HCT116 (cell line): ENCODE measurements at regions of chr11 and their contacts with region 1.

Region 1: DNA sequence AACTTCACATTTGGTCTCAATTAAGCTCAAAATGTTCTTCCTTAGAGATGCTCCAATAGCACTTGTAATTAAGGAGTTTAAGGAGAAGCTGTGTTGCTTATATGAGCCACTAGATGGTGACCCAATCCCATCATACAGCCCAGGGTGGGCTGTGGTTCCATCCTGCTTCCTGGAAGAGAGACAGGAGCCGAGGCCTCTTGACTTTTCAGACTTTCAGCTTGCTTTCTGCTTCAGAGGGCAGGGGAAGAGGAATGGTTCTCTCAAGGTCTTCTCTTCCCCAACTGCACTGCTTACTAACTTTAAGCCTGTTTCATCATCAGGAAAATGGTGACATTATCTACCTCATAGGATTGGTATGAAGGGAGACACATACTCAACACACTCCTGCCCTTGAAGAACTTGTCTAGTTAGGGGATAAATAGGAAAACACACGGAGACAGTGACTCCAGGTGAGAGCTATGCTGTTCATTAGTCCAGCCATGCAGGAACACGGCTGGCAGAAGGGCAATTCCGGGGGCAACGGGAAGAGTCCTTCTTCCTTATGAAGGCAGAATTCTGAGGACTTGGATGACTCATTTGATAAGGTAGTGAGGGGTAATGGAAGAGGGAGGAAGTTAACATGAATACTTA is 20.1 kb downstream of the TMEM218 start:
- DNase-seq: no peak
- ATAC-seq: peak; percentile 80
- H3K4me3 ChIP-seq: no peak overlapping the region
- H3K27ac ChIP-seq: no peak overlapping the region
- H3K4me1 ChIP-seq: peaks cover 9 to 31% of the 10 kb centered on the region in 2 experiments; a peak in 3 of 4 replicates
- H3K27me3 ChIP-seq: no peaks in the 10 kb centered on the region
- CTCF ChIP-seq: peak; percentile 60 to 87 (median 80)
- POLR2A ChIP-seq: no peak
- RAD21 ChIP-seq: peak; percentile 90

Region 2: DNA sequence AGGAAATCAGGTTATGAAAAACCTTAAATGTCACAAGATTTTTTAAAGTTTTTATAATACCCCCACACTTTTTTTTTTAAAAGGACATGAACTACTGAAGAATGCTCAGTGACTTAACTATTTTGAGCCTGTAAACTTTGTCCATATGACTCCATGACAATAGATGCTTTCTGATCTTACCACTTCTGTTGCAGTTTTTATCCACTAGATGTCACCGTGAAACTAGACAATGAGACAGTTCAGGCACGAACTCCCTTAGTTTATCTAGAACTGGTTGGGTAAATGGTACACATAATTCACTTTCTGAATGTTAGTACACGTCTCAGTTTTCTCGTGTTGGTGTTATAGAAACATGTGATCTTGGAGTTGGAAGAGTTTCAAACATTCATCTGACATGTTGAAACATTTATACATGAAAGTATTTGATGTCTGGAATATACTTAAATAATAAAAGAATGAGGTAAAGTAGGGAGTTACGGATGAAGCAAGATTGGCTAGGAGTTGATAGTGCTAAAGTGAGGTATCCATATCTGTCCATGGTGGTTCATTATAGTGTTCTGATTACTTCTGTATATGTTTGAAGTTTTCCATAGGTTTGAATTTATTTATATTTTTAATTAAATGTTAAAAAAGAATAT is 129.3 kb before region 1 on chr11:
- CTCF ChIA-PET with region 1: interaction called, 3 read pairs
- POLR2A ChIA-PET with region 1: no interaction called
- RAD21 ChIA-PET with region 1: no interaction called
- intact Hi-C with region 1: loop called (anchors 2 kb)
- DNase-seq: peak; percentile 71
- ATAC-seq: peak; percentile 99
- H3K4me3 ChIP-seq: no peak overlapping the region
- H3K27ac ChIP-seq: no peak overlapping the region
- H3K4me1 ChIP-seq: no peaks in the 10 kb centered on the region
- H3K27me3 ChIP-seq: no peaks in the 10 kb centered on the region
- CTCF ChIP-seq: peak; percentile 59 to 93 (median 81)
- POLR2A ChIP-seq: no peak
- RAD21 ChIP-seq: peak; percentile 96

Region 3: GRCh38 chr11:125123947-125124617 is 32.7 kb after region 1 on chr11:
- CTCF ChIA-PET with region 1: interaction called, 26 read pairs
- POLR2A ChIA-PET with region 1: interaction called, 11 read pairs
- RAD21 ChIA-PET with region 1: interaction called, 3 to 4 read pairs
- intact Hi-C with region 1: no loop called
- DNase-seq: peak; percentile 86
- ATAC-seq: peak; percentile 99
- H3K4me3 ChIP-seq: peak overlapping the region; percentile 29 to 52
- H3K27ac ChIP-seq: peak overlapping the region; percentile 26; the same call in 1 of the 2 replicates
- H3K4me1 ChIP-seq: peaks cover 4 to 15% of the 10 kb centered on the region in 2 experiments; a peak in 3 of 4 replicates
- H3K27me3 ChIP-seq: 0 out of 2 replicates have a peak, but pooled peaks cover 4% of the 10 kb centered on the region
- CTCF ChIP-seq: peak; percentile 44 to 72 (median 68); a peak in 5 of 6 replicates
- POLR2A ChIP-seq: peak; percentile 81
- RAD21 ChIP-seq: peak; percentile 37; the same call in 1 of the 2 replicates

Region 4: GRCh38 chr11:125218336-125218735 is 127.0 kb after region 1 on chr11:
- CTCF ChIA-PET with region 1: no interaction called
- POLR2A ChIA-PET with region 1: no interaction called
- RAD21 ChIA-PET with region 1: no interaction called
- intact Hi-C with region 1: no loop called
- DNase-seq: no peak
- ATAC-seq: no peak
- H3K4me3 ChIP-seq: no peak overlapping the region
- H3K27ac ChIP-seq: no peak overlapping the region
- H3K4me1 ChIP-seq: no peaks in the 10 kb centered on the region
- H3K27me3 ChIP-seq: 0 out of 2 replicates have a peak, but pooled peaks cover 3% of the 10 kb centered on the region
- CTCF ChIP-seq: no peak
- POLR2A ChIP-seq: no peak
- RAD21 ChIP-seq: no peak

Region 5: DNA sequence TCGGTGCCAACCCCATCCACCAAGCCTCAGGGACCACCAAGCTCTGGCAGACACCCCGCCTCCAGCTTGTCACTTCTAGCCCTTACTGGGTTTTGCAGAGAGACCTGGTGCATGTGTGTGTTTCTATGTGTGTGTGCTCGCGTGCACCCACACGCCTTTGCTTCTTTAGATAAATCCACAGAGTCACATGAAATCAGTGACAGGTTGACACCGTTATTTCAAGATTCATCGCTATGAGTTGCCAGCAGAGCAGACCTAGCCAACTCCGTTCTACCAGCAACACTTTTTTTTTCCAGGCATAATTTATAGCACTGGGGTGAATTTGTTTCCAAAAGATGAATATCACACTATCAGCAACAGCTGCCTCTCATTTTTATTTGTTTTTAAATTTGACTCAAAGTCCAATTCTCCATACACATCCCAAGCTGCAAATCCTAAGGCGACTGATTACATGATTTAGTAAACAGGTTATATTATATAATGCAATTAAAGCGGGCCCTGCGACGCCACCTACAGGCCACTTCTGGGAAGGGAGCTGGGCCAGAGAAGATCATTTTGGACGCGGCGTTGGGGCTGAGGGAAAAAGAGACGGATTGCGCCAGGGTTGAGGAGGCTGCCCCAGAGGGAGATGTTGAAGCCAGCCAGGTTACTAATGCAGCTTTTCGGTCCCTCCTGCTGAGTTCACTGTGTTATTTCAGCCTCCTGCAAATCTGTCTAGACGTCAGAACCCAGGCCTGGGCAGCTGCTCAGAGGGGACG is 254.2 kb after region 1 on chr11:
- CTCF ChIA-PET with region 1: interaction called, 32 read pairs
- POLR2A ChIA-PET with region 1: no interaction called
- RAD21 ChIA-PET with region 1: interaction called, 4 read pairs
- intact Hi-C with region 1: loop called (anchors 1 kb)
- DNase-seq: no peak
- ATAC-seq: peak; percentile 84
- H3K4me3 ChIP-seq: no peak overlapping the region
- H3K27ac ChIP-seq: no peak overlapping the region
- H3K4me1 ChIP-seq: peaks cover 0 to 2% of the 10 kb centered on the region in 2 experiments; a peak in 1 of 4 replicates
- H3K27me3 ChIP-seq: no peaks in the 10 kb centered on the region
- CTCF ChIP-seq: peak; percentile 83 to 92 (median 91)
- POLR2A ChIP-seq: no peak
- RAD21 ChIP-seq: peak; percentile 72

Region 6: GRCh38 chr11:125429166-125429707 is 337.9 kb after region 1 on chr11:
- CTCF ChIA-PET with region 1: interaction called, 36 read pairs
- POLR2A ChIA-PET with region 1: no interaction called
- RAD21 ChIA-PET with region 1: interaction called in 1 of 2 experiments, 4 read pairs
- intact Hi-C with region 1: loop called (anchors 1 kb)
- DNase-seq: peak; percentile 63
- ATAC-seq: peak; percentile 78
- H3K4me3 ChIP-seq: peak overlapping the region; percentile 18 to 22; a peak in 3 of 4 replicates
- H3K27ac ChIP-seq: no peak overlapping the region
- H3K4me1 ChIP-seq: peaks cover 7 to 20% of the 10 kb centered on the region in 2 experiments; a peak in 3 of 4 replicates
- H3K27me3 ChIP-seq: no peaks in the 10 kb centered on the region
- CTCF ChIP-seq: peak; percentile 81 to 91 (median 86)
- POLR2A ChIP-seq: no peak
- RAD21 ChIP-seq: peak; percentile 85

Region 7: DNA sequence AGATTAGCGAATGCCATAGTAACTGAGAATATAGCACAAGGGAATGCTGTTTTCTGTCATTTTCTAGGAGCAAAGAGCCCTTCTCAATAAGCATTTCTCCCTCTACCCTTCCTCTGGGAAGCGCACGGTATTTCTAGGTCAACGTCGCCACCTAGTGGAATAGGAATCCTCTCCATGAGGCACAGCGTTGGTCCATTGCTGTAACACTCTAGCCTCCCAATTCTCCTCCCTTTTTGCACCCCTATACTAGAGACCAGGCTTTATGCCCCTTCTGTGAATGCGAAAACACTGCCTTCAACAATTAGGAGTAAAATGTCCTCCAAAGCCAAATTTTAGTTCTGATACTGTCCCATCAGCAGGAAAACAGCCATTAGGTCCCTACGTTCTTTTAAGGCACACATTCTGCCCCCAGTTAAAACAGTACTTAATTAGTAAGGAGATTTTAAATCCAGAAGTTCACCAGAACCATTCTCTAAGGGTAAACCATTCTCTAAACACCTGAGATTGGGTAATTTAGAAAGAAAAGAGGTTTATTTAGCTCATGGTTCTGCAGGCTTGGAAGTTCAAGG is 783.3 kb after region 1 on chr11:
- CTCF ChIA-PET with region 1: no interaction called
- POLR2A ChIA-PET with region 1: no interaction called
- RAD21 ChIA-PET with region 1: no interaction called
- intact Hi-C with region 1: loop called (anchors 1 kb)
- DNase-seq: peak; percentile 44
- ATAC-seq: peak; percentile 96
- H3K4me3 ChIP-seq: no peak overlapping the region
- H3K27ac ChIP-seq: no peak overlapping the region
- H3K4me1 ChIP-seq: no peaks in the 10 kb centered on the region
- H3K27me3 ChIP-seq: no peaks in the 10 kb centered on the region
- CTCF ChIP-seq: peak; percentile 71 to 85 (median 80)
- POLR2A ChIP-seq: no peak
- RAD21 ChIP-seq: peak; percentile 90